PC-9 (cell line): ENCODE measurements at regions of chr17 and their contacts with region 1.

Region 1: GRCh38 chr17:30093463-30094147 is 23.0 kb upstream of the NSRP1 start:
- DNase-seq: peak; percentile 40 to 56
- H3K4me3 ChIP-seq: no peak overlapping the region
- H3K27ac ChIP-seq: no peak overlapping the region
- H3K4me1 ChIP-seq: no peaks in the 10 kb centered on the region
- H3K27me3 ChIP-seq: 0 out of 2 replicates have a peak, but pooled peaks cover 5% of the 10 kb centered on the region
- CTCF ChIP-seq: peak; percentile 95

Region 2: GRCh38 chr17:29369831-29370735 is 723.5 kb before region 1 on chr17:
- CTCF ChIA-PET with region 1: interaction called, 4 read pairs
- POLR2A ChIA-PET with region 1: no interaction called
- intact Hi-C with region 1: loop called (anchors 2 kb)
- DNase-seq: peak; percentile 61 to 71
- H3K4me3 ChIP-seq: peak overlapping the region; percentile 10; the same call in 1 of the 2 replicates
- H3K27ac ChIP-seq: no peak overlapping the region
- H3K4me1 ChIP-seq: peaks cover 11% of the 10 kb centered on the region
- H3K27me3 ChIP-seq: no peaks in the 10 kb centered on the region
- CTCF ChIP-seq: peak; percentile 89

Region 3: GRCh38 chr17:29568331-29569244 is 525.0 kb before region 1 on chr17 and contains the start of gene TP53I13:
- CTCF ChIA-PET with region 1: no interaction called
- POLR2A ChIA-PET with region 1: no interaction called
- intact Hi-C with region 1: loop called (anchors 5 kb)
- DNase-seq: peak; percentile 64 to 89
- H3K4me3 ChIP-seq: peak within 1 kb of the TSS; percentile 76
- H3K27ac ChIP-seq: peak within 1 kb of the TSS; percentile 53
- H3K4me1 ChIP-seq: peaks cover 28% of the 10 kb centered on the region
- H3K27me3 ChIP-seq: no peaks in the 10 kb centered on the region
- CTCF ChIP-seq: no peak
- total RNA-seq, gene TP53I13: 46.9 and 68.8 TPM in 2 replicates

Region 4: GRCh38 chr17:29579866-29580771 is 513.5 kb before region 1 on chr17:
- CTCF ChIA-PET with region 1: interaction called, 22 read pairs
- POLR2A ChIA-PET with region 1: no interaction called
- intact Hi-C with region 1: loop called (anchors 1 kb)
- DNase-seq: peak; percentile 69 to 83
- H3K4me3 ChIP-seq: no peak overlapping the region
- H3K27ac ChIP-seq: no peak overlapping the region
- H3K4me1 ChIP-seq: no peaks in the 10 kb centered on the region
- H3K27me3 ChIP-seq: no peaks in the 10 kb centered on the region
- CTCF ChIP-seq: peak; percentile 87

Region 5: DNA sequence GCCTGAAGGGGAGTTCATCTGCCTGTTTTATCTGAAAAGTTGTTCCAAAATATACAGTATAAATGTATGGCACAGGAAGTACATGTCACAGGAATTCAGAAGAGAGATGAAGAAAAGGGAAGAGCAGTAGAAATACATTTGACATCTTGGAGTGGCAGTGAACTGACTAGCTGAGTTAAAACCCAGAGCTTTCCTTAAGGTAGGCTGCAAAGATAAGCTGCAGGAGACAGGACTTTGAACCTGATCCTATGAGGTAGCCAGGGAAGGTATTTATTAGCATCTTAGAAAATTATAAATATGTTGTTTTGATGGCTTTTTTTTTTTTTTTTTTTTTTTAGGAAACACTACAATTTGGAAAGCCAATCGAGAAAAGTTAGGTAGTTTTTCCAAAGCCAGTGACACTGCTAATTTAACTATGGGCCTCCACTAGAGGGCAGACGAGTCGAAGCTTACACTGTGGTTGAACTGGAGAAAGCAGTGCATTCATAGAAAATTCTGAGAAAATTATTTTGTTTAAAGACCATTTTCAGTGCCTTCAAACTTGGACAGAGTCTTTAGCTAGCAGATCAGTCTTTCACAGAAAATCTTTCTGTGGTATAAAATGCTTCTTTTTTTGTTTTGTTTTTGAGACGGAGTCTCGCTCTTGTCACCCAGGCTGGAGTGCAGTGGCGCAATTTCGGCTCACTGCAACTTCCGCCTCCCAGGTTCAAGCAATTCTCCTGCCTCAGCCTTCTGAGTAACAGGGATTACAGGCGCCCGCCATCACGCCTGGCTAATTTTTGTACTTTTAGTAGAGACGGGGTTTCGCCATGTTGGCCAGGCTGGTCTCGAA is 285.9 kb before region 1 on chr17:
- CTCF ChIA-PET with region 1: interaction called, 8 read pairs
- POLR2A ChIA-PET with region 1: no interaction called
- intact Hi-C with region 1: loop called (anchors 1 kb)
- DNase-seq: peak in 1 of 2 experiments; percentile 55
- H3K4me3 ChIP-seq: no peak overlapping the region
- H3K27ac ChIP-seq: no peak overlapping the region
- H3K4me1 ChIP-seq: no peaks in the 10 kb centered on the region
- H3K27me3 ChIP-seq: no peaks in the 10 kb centered on the region
- CTCF ChIP-seq: peak; percentile 87

Region 6: DNA sequence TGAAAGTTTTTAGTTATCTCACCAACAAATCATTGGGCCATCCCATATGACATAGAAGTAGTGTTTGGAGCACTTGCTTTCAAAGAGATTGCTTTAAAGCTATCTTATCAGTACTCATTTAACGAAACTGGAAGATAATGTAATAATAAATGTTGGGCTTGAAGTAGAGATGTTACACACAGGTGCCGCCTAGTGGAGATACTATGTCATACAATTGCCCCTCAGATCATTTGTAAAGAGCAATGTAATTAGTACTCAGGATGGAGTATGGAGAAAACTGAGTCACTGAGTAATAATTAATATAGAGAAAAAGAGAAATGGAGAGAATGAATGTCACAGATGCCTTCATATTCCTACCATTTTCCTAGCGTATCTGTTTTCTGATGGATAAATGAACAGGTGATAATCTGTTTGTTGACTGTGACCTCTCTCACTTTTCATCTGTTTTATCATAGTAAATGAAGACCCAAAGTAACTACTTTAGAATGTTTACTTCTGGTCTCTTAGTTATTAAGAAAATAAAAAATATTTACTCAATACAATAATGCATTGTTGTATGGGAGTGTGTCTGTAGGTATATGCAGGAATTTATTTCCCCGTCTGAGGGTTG is 71.8 kb before region 1 on chr17:
- CTCF ChIA-PET with region 1: interaction called, 4 read pairs
- POLR2A ChIA-PET with region 1: no interaction called
- intact Hi-C with region 1: loop called (anchors 1 kb)
- DNase-seq: peak in 1 of 2 experiments; percentile 14
- H3K4me3 ChIP-seq: no peak overlapping the region
- H3K27ac ChIP-seq: no peak overlapping the region
- H3K4me1 ChIP-seq: no peaks in the 10 kb centered on the region; the same call in 1 of the 2 replicates
- H3K27me3 ChIP-seq: no peaks in the 10 kb centered on the region
- CTCF ChIP-seq: peak; percentile 93

Region 7: DNA sequence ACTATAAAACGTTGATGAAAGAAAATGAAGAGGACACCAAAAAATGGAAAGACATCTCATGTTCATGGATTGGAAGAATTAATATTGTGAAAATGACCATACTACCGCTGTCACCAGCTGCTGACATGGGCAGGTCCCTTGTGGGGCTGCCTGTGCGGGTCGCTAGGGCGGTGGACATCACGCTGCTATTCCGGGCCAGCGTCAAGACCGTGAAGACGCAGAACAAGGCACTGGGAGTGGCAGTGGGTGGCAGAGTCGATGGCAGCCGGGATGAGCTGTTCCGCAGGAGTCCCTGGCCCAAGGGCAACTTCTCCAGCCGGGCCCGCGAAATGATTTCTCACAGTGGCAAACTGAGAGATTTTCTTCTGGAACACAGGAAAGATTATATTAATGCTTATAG is 25.1 kb before region 1 on chr17:
- CTCF ChIA-PET with region 1: no interaction called
- POLR2A ChIA-PET with region 1: no interaction called
- intact Hi-C with region 1: no loop called
- DNase-seq: no peak
- H3K4me3 ChIP-seq: no peak overlapping the region
- H3K27ac ChIP-seq: no peak overlapping the region
- H3K4me1 ChIP-seq: no peaks in the 10 kb centered on the region
- H3K27me3 ChIP-seq: no peaks in the 10 kb centered on the region
- CTCF ChIP-seq: no peak

Region 8: GRCh38 chr17:30344283-30345088 is 250.9 kb after region 1 on chr17:
- CTCF ChIA-PET with region 1: no interaction called
- POLR2A ChIA-PET with region 1: no interaction called
- intact Hi-C with region 1: no loop called
- DNase-seq: peak; percentile 68 to 98
- H3K4me3 ChIP-seq: peak overlapping the region; percentile 33; the same call in 1 of the 2 replicates
- H3K27ac ChIP-seq: peak overlapping the region; percentile 96
- H3K4me1 ChIP-seq: peaks cover 64% of the 10 kb centered on the region
- H3K27me3 ChIP-seq: no peaks in the 10 kb centered on the region
- CTCF ChIP-seq: no peak